ENCODE measurements at regions of chr13 and their contacts with region 1.

Region 1: DNA sequence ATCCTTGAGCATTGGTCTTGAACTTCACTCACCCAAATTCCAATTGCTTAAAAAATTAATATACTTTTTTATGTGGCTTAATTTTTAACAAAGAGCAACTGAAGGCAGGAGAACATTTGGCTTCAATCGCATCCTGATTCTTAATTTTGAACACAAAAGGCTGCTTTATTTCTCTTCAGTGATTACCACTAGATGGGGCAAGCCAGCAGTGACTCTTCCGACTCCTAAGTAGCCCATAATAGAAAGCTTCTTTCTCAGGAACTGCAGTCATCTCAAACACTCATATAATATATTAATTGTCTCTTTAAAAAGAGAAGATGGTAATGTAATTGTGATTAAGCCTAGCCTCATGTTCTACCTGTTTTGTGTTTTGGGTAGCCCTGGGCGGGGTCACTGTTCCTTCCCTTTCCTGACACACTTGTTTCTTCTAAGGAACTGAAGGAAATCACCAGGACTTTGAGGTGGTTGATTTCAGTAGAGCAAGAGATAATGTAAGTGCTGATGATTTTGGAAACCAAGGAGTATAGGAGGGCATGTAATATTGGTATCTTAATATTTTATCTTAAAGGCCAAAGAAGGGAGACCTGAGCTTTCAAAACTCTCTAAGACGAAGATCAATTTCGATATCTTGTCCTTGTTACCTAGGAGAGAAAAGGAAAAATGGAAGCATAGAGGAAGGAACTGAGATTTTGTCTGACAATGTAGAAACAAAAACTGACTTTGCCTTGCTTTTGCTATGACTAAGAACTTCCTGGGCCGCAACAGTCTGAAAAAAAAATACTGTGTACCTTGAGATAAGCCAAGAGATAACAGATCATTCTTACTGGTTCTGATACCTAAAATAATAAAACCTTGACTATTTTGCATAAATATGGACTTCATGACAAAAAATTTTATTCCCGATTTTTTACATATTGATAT is 73.1 kb downstream of the TNFSF13B start:
- DNase-seq: peak; percentile 18 to 68 (median 40)
- H3K4me3 ChIP-seq: peak overlapping the region in 1 of 2 donors; percentile 13
- H3K4me3 Mint-ChIP-seq: peak overlapping the region; percentile 36 to 89 (median 78)
- H3K27ac ChIP-seq: peak overlapping the region; percentile 15
- H3K27ac Mint-ChIP-seq: peak overlapping the region; percentile 51 to 95 (median 85)
- H3K4me1 ChIP-seq: peaks cover 56% of the 10 kb centered on the region
- H3K4me1 Mint-ChIP-seq: peaks cover 24 to 68% (median 44%) of the 10 kb centered on the region in 4 donors
- H3K27me3 ChIP-seq: no peaks in the 10 kb centered on the region
- H3K27me3 Mint-ChIP-seq: no peaks in the 10 kb centered on the region

Region 2: DNA sequence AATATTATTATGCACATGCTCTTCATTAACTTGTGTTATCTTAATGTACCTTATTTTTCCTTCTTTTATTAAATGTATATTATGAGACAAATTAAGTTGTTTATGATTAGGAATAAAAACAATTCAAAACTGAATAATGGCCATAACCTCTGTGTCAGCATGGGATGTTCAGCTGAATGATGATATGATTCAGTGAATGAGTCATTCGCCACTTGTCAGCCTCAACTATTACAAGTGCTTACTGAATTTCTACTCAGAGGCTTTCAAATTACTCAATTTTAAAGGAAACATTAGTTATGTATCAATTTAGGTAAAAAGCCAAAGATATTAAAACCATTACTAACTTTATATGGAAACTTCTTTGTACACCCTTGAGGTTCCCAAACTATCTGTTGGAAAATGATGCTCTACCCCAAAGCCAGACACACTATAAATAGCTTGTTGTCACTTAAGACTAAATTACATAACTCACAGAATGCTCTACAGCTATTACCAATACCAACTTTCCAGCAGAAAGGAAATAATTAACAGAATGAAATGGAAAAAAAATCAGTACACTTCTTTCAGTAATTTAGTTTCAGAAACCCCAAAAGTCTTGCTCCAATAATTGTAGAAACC is 141.7 kb before region 1 on chr13:
- CTCF ChIA-PET with region 1: no interaction called
- POLR2A ChIA-PET with region 1: no interaction called
- intact Hi-C with region 1: no loop called
- DNase-seq: no peak
- H3K4me3 ChIP-seq: no peak overlapping the region
- H3K4me3 Mint-ChIP-seq: no peak overlapping the region
- H3K27ac ChIP-seq: no peak overlapping the region
- H3K27ac Mint-ChIP-seq: no peak overlapping the region
- H3K4me1 ChIP-seq: no peaks in the 10 kb centered on the region
- H3K4me1 Mint-ChIP-seq: peaks cover 0 to 5% (median 4%) of the 10 kb centered on the region in 4 donors
- H3K27me3 ChIP-seq: no peaks in the 10 kb centered on the region
- H3K27me3 Mint-ChIP-seq: peaks cover 6 to 31% of the 10 kb centered on the region in 2 donors

Region 3: DNA sequence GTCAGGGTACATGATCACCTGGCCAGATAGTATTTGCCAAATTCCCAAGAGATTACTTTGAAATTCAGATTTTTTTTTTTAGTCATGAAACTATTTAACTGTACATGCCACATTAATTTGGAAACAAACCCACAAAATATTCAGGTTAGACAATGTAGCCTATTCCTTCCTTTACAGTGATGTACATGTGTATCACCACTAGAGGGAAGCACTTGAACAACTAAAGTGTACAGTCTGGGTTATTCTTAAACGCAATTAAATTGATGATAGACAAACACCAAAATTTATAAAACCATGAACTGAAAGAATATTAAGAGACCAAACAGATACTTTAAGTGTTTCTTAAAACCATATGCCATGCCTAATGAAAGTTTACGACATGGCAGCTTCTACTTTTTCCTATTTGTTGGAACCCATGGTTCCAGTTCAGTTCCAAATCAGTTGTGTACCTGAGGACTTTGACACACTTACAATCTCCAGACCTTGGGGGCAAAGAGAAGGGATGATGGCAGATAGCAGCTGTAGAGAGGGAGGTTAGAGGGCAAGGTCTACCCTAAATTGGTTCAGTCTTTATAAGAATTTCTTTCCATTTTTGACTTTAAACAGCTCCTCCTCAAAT is 20.3 kb before region 1 on chr13:
- CTCF ChIA-PET with region 1: interaction called, 11 read pairs
- POLR2A ChIA-PET with region 1: interaction called, 11 read pairs
- intact Hi-C with region 1: loop called (anchors 1 kb)
- DNase-seq: peak in 4 of 5 donors; percentile 51 to 60 (median 54)
- H3K4me3 ChIP-seq: no peak overlapping the region
- H3K4me3 Mint-ChIP-seq: peak overlapping the region in 2 of 8 donors; percentile 37 to 40
- H3K27ac ChIP-seq: no peak overlapping the region
- H3K27ac Mint-ChIP-seq: peak overlapping the region in 1 of 7 donors; percentile 41
- H3K4me1 ChIP-seq: peaks cover 21% of the 10 kb centered on the region
- H3K4me1 Mint-ChIP-seq: peaks cover 13 to 49% (median 33%) of the 10 kb centered on the region in 4 donors
- H3K27me3 ChIP-seq: no peaks in the 10 kb centered on the region
- H3K27me3 Mint-ChIP-seq: no peaks in the 10 kb centered on the region

Region 4: GRCh38 chr13:108407495-108407894 is 64.9 kb after region 1 on chr13:
- CTCF ChIA-PET with region 1: interaction called, 4 read pairs
- POLR2A ChIA-PET with region 1: interaction called, 8 read pairs
- intact Hi-C with region 1: loop called (anchors 1 kb)
- DNase-seq: no peak
- H3K4me3 ChIP-seq: no peak overlapping the region
- H3K4me3 Mint-ChIP-seq: peak overlapping the region in 1 of 8 donors; percentile 27
- H3K27ac ChIP-seq: no peak overlapping the region
- H3K27ac Mint-ChIP-seq: peak overlapping the region in 6 of 7 donors; percentile 22 to 87 (median 62)
- H3K4me1 ChIP-seq: peaks cover 52% of the 10 kb centered on the region
- H3K4me1 Mint-ChIP-seq: peaks cover 41 to 71% (median 57%) of the 10 kb centered on the region in 4 donors
- H3K27me3 ChIP-seq: no peaks in the 10 kb centered on the region
- H3K27me3 Mint-ChIP-seq: no peaks in the 10 kb centered on the region

Region 5: GRCh38 chr13:108586826-108587225 is 244.2 kb after region 1 on chr13:
- CTCF ChIA-PET with region 1: no interaction called
- POLR2A ChIA-PET with region 1: no interaction called
- intact Hi-C with region 1: loop called (anchors 10 kb)
- DNase-seq: no peak
- H3K4me3 ChIP-seq: no peak overlapping the region
- H3K4me3 Mint-ChIP-seq: peak overlapping the region in 1 of 8 donors; percentile 13
- H3K27ac ChIP-seq: no peak overlapping the region
- H3K27ac Mint-ChIP-seq: no peak overlapping the region
- H3K4me1 ChIP-seq: no peaks in the 10 kb centered on the region
- H3K4me1 Mint-ChIP-seq: peaks cover 0 to 4% (median under 1%) of the 10 kb centered on the region in 4 donors
- H3K27me3 ChIP-seq: no peaks in the 10 kb centered on the region
- H3K27me3 Mint-ChIP-seq: peaks cover 2 to 8% of the 10 kb centered on the region in 2 donors